ENCODE measurements at regions of chr10 and their contacts with region 1.

Region 1: DNA sequence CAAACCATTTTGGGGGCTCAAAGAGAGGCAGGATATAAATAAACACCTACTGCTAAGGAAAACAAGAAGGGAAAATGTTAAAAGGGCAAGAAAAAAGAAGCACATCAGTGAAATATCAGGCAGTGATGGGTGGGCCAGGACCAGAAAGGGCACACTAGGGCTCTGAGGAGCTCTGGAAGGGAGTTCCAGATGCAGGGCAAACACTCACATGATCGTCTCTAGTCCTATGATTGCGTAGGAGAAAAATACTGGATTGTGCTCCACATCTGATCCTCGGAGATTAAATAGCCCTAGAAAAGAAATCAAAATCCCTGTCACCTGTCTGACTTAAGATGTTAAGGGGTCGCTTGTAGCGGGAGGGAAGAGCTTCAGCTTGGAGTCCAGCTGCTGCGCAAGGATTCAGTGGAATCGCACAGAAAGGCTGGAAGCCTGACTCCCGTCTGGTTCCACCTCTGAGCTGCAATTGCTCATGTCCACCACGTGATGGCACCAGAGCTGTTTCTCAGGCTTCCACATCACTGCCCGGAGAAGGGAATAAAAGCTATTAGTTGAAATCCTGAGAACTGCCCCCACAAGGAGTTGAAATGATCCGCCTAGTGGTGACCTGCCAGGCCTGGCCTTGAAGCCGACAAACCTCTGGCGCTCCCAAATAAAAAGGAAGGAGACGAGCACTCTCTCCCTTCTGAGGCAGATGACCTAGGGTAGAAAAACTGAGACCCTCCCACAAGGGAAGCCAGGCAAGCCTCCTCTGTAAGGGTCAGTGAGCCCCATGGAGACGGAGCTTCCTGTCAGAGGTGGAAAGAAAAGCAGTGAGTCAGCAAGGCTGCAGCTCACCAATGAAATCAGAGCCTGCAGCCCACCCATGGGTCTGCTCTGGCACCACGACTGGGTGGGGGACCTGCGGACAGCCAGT is 39.2 kb downstream of the XPNPEP1 start:
- DNase-seq: peak; percentile 71
- H3K4me3 Mint-ChIP-seq: no peak overlapping the region
- H3K27ac Mint-ChIP-seq: no peak overlapping the region
- H3K4me1 Mint-ChIP-seq: peaks cover 9% of the 10 kb centered on the region
- H3K27me3 Mint-ChIP-seq: no peaks in the 10 kb centered on the region

Region 2: GRCh38 chr10:109895095-109895818 is 11.1 kb after region 1 on chr10:
- CTCF ChIA-PET with region 1: interaction called, 15 read pairs
- DNase-seq: no peak
- H3K4me3 Mint-ChIP-seq: no peak overlapping the region
- H3K27ac Mint-ChIP-seq: no peak overlapping the region
- H3K4me1 Mint-ChIP-seq: peaks cover 38% of the 10 kb centered on the region
- H3K27me3 Mint-ChIP-seq: no peaks in the 10 kb centered on the region

Region 3: DNA sequence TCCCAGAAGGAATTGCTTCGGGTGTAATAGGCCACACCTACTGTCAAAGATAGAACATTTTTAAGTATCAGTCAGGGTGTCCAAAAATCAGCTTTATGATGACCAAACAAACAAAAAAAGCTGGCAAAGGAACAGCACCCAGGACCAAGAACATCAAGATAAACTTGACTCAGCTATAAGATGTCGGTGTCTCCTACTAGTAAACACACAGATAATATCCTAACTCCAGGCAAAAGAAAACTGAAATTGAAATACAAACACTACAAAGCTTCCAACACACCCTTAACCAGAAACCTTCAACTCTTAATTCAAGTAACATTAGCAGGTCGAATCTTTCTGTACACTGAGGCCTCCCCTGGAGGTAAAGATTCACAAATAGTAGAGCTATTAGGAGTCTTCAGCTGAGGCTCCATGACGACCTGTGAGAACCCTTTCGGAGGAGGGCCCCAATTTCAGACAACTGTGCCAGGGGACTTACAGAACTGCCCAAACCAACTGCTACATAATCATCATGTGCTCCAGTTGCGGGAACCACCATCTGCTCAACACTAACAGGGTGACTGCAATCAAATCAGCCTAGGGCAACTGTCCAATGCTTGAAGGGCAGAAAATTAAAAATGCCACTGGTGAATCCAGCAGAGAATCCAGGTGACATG is 18.9 kb after region 1 on chr10:
- CTCF ChIA-PET with region 1: interaction called, 26 read pairs
- DNase-seq: peak; percentile 44
- H3K4me3 Mint-ChIP-seq: peak overlapping the region; percentile 59
- H3K27ac Mint-ChIP-seq: peak overlapping the region; percentile 98
- H3K4me1 Mint-ChIP-seq: peaks cover 64% of the 10 kb centered on the region
- H3K27me3 Mint-ChIP-seq: no peaks in the 10 kb centered on the region

Region 4: GRCh38 chr10:109912335-109913281 is 28.5 kb after region 1 on chr10:
- CTCF ChIA-PET with region 1: interaction called, 26 read pairs
- DNase-seq: no peak
- H3K4me3 Mint-ChIP-seq: no peak overlapping the region
- H3K27ac Mint-ChIP-seq: peak overlapping the region; percentile 25
- H3K4me1 Mint-ChIP-seq: peaks cover 80% of the 10 kb centered on the region
- H3K27me3 Mint-ChIP-seq: no peaks in the 10 kb centered on the region

Region 5: GRCh38 chr10:109978481-109978880 is 94.4 kb after region 1 on chr10:
- CTCF ChIA-PET with region 1: interaction called, 24 read pairs
- DNase-seq: peak; percentile 77
- H3K4me3 Mint-ChIP-seq: no peak overlapping the region
- H3K27ac Mint-ChIP-seq: no peak overlapping the region
- H3K4me1 Mint-ChIP-seq: peaks cover 8% of the 10 kb centered on the region
- H3K27me3 Mint-ChIP-seq: peaks cover 6% of the 10 kb centered on the region